ENCODE measurements at regions of chr1 and their contacts with region 1.

Region 1: GRCh38 chr1:206583707-206584648 is 28.3 kb downstream of the EIF2D start:
- DNase-seq: peak; percentile 63 to 88
- ATAC-seq: peak; percentile 76

Region 2: GRCh38 chr1:206489980-206490770 is 93.8 kb before region 1 on chr1:
- intact Hi-C with region 1: loop called (anchors 5 to 10 kb)
- DNase-seq: peak in 1 of 2 donors; percentile 77
- ATAC-seq: peak; percentile 85

Region 3: GRCh38 chr1:206526064-206526911 is 57.7 kb before region 1 on chr1:
- intact Hi-C with region 1: no loop called
- DNase-seq: no peak
- ATAC-seq: no peak

Region 4: GRCh38 chr1:206544562-206545257 is 39.3 kb before region 1 on chr1:
- intact Hi-C with region 1: loop called in 1 of 2 experiments (anchors 5 kb)
- DNase-seq: peak in 1 of 2 donors; percentile 82
- ATAC-seq: peak; percentile 62

Region 5: DNA sequence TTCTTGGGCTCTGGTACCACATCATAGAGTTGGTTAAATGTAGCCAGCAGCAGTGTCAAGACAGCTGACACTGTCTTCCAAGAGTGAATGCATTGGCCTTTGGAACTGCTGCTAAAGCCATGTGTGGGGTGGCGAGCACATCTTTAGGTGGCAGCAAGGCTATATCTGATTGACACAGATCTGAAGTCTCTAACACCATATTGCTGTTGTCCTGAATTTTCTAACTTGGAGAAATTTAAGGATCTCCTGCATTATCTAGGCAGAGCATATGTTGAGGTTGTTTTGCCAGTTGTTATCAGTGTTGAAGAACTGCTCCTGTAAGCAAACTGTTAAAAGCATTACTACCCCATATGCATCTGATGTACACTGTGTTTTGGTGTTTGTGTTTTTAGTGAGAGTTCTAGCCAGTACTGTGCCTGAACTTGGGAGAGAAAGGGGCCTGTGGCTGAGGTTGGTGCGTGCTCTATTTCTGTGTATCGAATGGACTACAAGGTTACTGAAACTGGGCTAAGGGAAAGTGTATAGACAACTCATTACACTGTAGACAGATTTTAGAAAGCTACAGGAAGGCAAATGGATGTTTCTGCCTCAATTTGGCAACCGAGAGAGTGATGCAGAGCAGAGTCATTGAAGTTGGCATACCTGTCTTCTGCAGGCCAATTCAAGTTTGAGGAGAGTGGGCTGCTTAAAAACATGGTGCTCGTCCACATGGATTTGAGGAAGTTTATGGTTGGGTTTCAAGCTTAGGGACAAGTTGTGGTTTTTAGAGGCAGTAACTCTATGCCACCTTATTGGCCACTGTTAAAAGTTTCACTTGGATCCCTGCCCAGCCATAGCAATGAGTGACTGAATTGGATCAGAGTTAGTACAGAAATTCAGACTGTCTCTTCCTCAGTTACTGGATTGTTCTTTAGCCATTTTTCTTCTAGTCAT is 68.2 kb after region 1 on chr1:
- intact Hi-C with region 1: no loop called
- DNase-seq: no peak
- ATAC-seq: peak; percentile 34